ENCODE measurements at regions of chr10 and their contacts with region 1.

Region 1: DNA sequence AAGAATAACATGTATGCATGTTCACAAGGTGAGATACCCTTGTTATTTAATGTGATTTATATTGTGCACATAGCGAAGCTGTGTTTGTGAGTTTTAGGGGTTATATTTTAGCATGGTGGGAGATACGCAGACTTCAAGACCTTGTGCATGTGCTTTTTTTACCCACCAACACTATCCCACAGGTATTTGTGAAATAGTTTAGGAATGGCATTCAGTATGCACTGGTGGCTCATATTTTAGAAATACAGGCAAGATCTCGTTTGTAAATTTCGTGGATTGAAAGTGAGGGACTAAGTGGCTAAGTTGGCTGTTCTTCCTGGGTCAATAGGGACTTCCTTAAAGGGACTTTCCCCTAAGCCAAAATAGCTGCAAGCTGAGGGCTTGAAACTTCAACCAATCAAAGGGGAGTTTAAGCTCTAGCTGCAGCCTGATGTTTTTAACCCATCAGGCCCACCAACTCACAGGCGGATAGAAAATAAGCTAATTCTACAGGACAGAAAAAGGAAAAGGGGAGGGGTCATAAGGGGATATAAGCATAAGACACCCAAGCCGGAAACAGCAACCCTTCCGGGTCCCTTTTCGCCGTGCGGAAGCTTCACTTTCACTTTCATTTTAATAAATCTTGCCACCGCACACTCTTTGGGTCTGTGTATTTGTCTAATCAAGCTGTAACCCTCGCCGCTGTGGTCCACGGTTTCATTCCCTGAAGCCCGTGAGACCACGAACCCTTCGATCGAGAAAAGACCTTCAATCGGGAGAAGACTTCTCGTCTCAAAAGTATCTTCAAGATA is 291.0 kb downstream of the GPR158 start:
- DNase-seq: peak; percentile 38 to 84 (median 55)
- ATAC-seq: peak; percentile 94
- H3K4me3 ChIP-seq: peak overlapping the region; percentile 55
- H3K27ac ChIP-seq: peak overlapping the region; percentile 82
- H3K4me1 ChIP-seq: peaks cover 0 to 8% of the 10 kb centered on the region in 2 experiments; a peak in 2 of 5 replicates
- H3K27me3 ChIP-seq: no peaks in the 10 kb centered on the region
- CTCF ChIP-seq: no peak
- EP300 ChIP-seq: no peak
- POLR2A ChIP-seq: peak; percentile 65
- RAD21 ChIP-seq: no peak

Region 2: GRCh38 chr10:25280599-25280998 is 185.2 kb before region 1 on chr10:
- CTCF ChIA-PET with region 1: no interaction called
- POLR2A ChIA-PET with region 1: no interaction called
- in situ Hi-C with region 1: no loop called
- intact Hi-C with region 1: no loop called
- DNase-seq: peak in 1 of 4 experiments; percentile 3
- ATAC-seq: no peak
- H3K4me3 ChIP-seq: no peak overlapping the region
- H3K27ac ChIP-seq: no peak overlapping the region
- H3K4me1 ChIP-seq: no peaks in the 10 kb centered on the region
- H3K27me3 ChIP-seq: no peaks in the 10 kb centered on the region
- CTCF ChIP-seq: no peak
- EP300 ChIP-seq: no peak
- POLR2A ChIP-seq: no peak
- RAD21 ChIP-seq: no peak

Region 3: GRCh38 chr10:25493122-25494009 is 27.6 kb after region 1 on chr10:
- CTCF ChIA-PET with region 1: no interaction called
- POLR2A ChIA-PET with region 1: interaction called, 4 read pairs
- in situ Hi-C with region 1: no loop called
- intact Hi-C with region 1: loop called (anchors 1 kb)
- DNase-seq: peak; percentile 58 to 94 (median 74)
- ATAC-seq: peak; percentile 100
- H3K4me3 ChIP-seq: no peak overlapping the region
- H3K27ac ChIP-seq: peak overlapping the region; percentile 85
- H3K4me1 ChIP-seq: peaks cover 0 to 27% of the 10 kb centered on the region in 2 experiments; a peak in 3 of 5 replicates
- H3K27me3 ChIP-seq: no peaks in the 10 kb centered on the region
- CTCF ChIP-seq: no peak
- EP300 ChIP-seq: peak; percentile 91
- POLR2A ChIP-seq: no peak
- RAD21 ChIP-seq: no peak; a peak in 1 of 4 replicates